Naive thymus-derived CD4-positive, alpha-beta T cell (primary cell): ENCODE measurements at regions of chr13 and their contacts with region 1.

Region 1: DNA sequence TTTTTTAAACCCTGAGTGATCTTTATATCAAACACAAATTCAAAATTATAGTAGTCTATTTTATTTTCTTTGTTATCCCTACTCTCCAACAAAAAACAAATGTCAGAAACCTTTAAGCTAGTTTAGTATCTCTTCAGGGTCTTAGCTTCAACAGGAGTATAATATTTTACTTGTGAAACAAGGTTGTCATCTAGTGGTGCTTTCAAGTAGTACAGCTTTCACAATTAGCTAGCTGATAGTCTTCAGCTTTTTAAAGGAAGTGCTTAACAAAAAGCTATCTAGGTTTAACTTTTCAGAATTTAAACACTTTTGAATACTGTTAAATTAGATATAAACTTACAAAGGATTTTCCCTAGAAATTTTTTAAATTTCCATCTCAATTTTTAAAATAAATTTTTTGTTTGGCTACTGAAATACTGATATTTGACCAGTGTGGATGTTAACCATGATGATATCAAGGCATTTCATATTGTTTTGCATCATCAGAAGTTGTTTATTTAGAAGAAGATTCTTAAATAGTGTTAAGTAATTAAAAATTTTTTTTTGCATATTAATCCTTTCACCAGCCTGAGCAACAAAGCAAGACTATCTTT is 34.2 kb downstream of the TDRD3 start:
- DNase-seq: peak in 6 of 9 donors; percentile 27 to 64 (median 53)
- ATAC-seq: peak; percentile 87
- H3K4me3 ChIP-seq: no peak overlapping the region
- H3K4me3 Mint-ChIP-seq: no peak overlapping the region
- H3K27ac ChIP-seq: no peak overlapping the region
- H3K27ac Mint-ChIP-seq: no peak overlapping the region
- H3K4me1 ChIP-seq: peaks cover 0 to 20% of the 10 kb centered on the region in 2 donors
- H3K4me1 Mint-ChIP-seq: peaks cover 12 to 31% (median 18%) of the 10 kb centered on the region in 7 donors
- H3K27me3 ChIP-seq: no peaks in the 10 kb centered on the region
- H3K27me3 Mint-ChIP-seq: no peaks in the 10 kb centered on the region

Region 2: DNA sequence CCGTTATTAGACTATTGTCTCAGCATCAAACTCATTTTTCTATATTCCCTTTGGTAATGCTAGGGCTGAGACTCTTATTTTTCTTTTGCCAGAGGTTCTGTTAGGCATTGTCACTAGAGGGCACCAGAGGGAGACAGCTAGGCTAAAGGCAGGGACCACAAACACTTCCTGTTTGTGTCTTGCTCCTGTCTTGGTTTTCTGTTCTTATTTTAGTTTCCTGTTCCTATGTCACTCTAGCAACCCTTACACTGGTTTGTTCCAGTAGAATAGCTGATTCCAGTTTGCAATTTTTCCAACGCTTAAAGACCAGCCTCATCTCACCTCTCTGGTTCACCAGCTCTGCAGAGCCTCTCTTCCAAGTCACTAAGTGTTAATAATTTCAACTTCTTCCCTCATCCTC is 1039.5 kb before region 1 on chr13:
- CTCF ChIA-PET with region 1: interaction called, 10 read pairs
- POLR2A ChIA-PET with region 1: interaction called, 3 read pairs
- intact Hi-C with region 1: loop called (anchors 1 kb)
- DNase-seq: peak; percentile 8 to 80 (median 73)
- ATAC-seq: peak; percentile 95
- H3K4me3 ChIP-seq: no peak overlapping the region
- H3K4me3 Mint-ChIP-seq: no peak overlapping the region
- H3K27ac ChIP-seq: no peak overlapping the region
- H3K27ac Mint-ChIP-seq: no peak overlapping the region
- H3K4me1 ChIP-seq: peaks cover 0 to 8% of the 10 kb centered on the region in 2 donors
- H3K4me1 Mint-ChIP-seq: peaks cover 0 to 6% (median 0%) of the 10 kb centered on the region in 7 donors
- H3K27me3 ChIP-seq: no peaks in the 10 kb centered on the region
- H3K27me3 Mint-ChIP-seq: peaks cover 0 to 22% (median 6%) of the 10 kb centered on the region in 5 donors

Region 3: DNA sequence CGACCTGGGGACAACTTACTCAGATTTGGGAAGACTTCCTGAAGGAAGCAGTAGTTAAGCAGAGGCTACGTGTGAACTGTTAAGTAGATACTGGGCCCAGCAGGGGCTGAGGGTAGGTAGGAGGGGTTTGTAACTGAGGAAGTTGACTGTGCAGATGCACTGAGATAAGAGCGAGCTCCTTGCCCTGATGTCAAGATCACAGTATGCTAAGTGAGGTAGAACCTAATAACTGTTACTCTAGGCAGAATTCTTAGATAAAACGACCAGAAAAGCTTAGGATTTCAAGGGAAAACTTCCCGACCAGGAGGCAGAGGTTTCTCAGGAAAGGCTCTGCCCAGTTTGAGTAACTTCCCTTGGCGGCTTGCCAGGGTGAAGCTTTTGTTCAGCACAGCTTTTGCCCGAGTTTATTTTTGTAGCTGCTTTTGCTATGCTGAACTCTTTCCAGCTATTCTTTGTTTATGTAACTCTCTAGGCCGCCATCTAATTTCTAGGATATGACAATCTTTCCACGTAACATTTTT is 899.6 kb before region 1 on chr13:
- CTCF ChIA-PET with region 1: no interaction called
- POLR2A ChIA-PET with region 1: no interaction called
- intact Hi-C with region 1: loop called in 1 of 2 experiments (anchors 10 kb)
- DNase-seq: peak in 7 of 9 donors; percentile 5 to 29 (median 11)
- ATAC-seq: peak; percentile 79
- H3K4me3 ChIP-seq: no peak overlapping the region
- H3K4me3 Mint-ChIP-seq: peak overlapping the region in 8 of 10 donors; percentile 11 to 70 (median 50)
- H3K27ac ChIP-seq: peak overlapping the region; percentile 6
- H3K27ac Mint-ChIP-seq: peak overlapping the region in 8 of 9 donors; percentile 29 to 92 (median 60)
- H3K4me1 ChIP-seq: no peaks in the 10 kb centered on the region
- H3K4me1 Mint-ChIP-seq: peaks cover 6 to 24% (median 15%) of the 10 kb centered on the region in 7 donors
- H3K27me3 ChIP-seq: no peaks in the 10 kb centered on the region
- H3K27me3 Mint-ChIP-seq: peaks cover 0 to under 1% (median 0%) of the 10 kb centered on the region in 5 donors

Region 4: DNA sequence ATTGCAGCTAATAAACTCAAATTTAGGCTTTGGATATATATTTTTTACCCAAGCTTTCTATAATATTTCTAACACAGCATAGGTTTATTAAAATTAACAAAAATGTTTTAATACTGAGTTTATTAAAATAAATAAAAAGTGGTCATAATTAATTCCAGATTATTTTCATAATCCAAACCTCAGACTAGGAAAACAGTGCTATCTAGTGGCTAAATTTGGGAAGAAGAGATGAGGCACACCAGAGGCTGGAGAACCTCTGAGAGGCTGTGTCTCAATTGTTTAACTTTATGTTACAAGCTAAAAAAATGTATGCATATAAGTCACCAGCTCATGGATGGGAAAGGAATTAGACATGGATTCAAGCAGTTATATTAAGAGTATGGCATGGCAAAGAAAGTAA is 659.9 kb before region 1 on chr13:
- CTCF ChIA-PET with region 1: no interaction called
- POLR2A ChIA-PET with region 1: no interaction called
- intact Hi-C with region 1: loop called in 1 of 2 experiments (anchors 10 kb)
- DNase-seq: no peak
- ATAC-seq: no peak
- H3K4me3 ChIP-seq: no peak overlapping the region
- H3K4me3 Mint-ChIP-seq: no peak overlapping the region
- H3K27ac ChIP-seq: no peak overlapping the region
- H3K27ac Mint-ChIP-seq: no peak overlapping the region
- H3K4me1 ChIP-seq: no peaks in the 10 kb centered on the region
- H3K4me1 Mint-ChIP-seq: peaks cover 0 to 6% (median 0%) of the 10 kb centered on the region in 7 donors
- H3K27me3 ChIP-seq: no peaks in the 10 kb centered on the region
- H3K27me3 Mint-ChIP-seq: no peaks in the 10 kb centered on the region

Region 5: GRCh38 chr13:60267498-60268198 is 163.6 kb before region 1 on chr13:
- CTCF ChIA-PET with region 1: no interaction called
- POLR2A ChIA-PET with region 1: no interaction called
- intact Hi-C with region 1: loop called in 1 of 2 experiments (anchors 5 kb)
- DNase-seq: peak in 6 of 9 donors; percentile 5 to 26 (median 14)
- ATAC-seq: peak; percentile 58
- H3K4me3 ChIP-seq: peak overlapping the region; percentile 79
- H3K4me3 Mint-ChIP-seq: no peak overlapping the region
- H3K27ac ChIP-seq: peak overlapping the region; percentile 49
- H3K27ac Mint-ChIP-seq: no peak overlapping the region
- H3K4me1 ChIP-seq: no peaks in the 10 kb centered on the region
- H3K4me1 Mint-ChIP-seq: peaks cover 0 to 3% (median 0%) of the 10 kb centered on the region in 7 donors
- H3K27me3 ChIP-seq: no peaks in the 10 kb centered on the region
- H3K27me3 Mint-ChIP-seq: peaks cover 5 to 13% (median 11%) of the 10 kb centered on the region in 5 donors

Region 6: DNA sequence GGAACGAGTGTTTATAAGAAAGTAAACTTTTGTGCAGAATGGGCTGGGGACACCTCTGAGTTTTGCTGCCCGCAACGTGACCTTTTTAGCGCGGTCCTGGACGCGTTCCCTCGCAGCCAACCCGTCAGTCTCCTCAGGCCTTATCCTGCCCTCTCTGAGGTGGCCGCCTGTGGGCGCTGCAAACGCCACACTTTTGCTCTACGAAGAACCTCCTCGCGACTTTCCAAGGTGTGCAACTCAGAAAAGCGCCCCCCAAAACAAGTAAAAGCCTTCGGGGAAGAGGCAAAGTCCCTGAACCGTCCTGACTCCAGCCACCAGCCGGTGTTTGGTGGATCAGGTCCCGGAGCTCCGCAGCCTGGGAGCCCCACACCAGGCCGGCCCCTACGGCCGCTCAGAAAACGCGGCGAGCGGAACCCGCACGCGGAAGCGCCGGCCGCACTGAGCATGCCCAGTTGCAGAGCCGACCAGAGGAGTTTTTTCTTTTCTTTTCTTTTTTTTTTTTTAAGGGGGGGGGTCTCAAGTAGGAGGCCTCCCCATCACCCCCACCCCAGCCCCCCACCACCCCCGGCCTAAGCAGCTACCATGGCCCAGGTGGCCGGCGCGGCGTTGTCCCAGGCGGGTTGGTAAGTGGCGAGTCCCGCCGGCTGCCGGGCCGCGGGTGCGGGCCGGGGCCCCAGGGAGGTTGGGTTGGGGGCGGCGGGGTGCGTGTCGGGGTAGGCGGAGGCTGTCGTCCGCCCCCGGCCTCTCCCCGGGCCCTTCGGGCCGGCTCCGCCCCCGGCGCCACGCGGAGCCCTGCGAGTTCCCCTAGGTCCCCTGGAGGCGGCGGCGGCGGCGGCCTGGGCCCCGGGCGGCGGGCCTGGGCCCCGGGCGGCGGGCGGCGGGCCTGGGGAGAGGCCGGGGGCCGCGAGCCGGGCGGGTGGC is 34.2 kb before region 1 on chr13 and contains the start of gene TDRD3:
- CTCF ChIA-PET with region 1: interaction called, 4 read pairs
- POLR2A ChIA-PET with region 1: interaction called, 10 read pairs
- intact Hi-C with region 1: loop called (anchors 1 kb)
- DNase-seq: peak; percentile 71 to 86 (median 82)
- ATAC-seq: peak; percentile 82
- H3K4me3 ChIP-seq: peak within 1 kb of the TSS; percentile 85
- H3K4me3 Mint-ChIP-seq: peak within 1 kb of the TSS; percentile 88 to 98 (median 95)
- H3K27ac ChIP-seq: peak within 1 kb of the TSS; percentile 80
- H3K27ac Mint-ChIP-seq: peak within 1 kb of the TSS; percentile 91 to 99 (median 96)
- H3K4me1 ChIP-seq: peaks cover 15 to 20% of the 10 kb centered on the region in 2 donors
- H3K4me1 Mint-ChIP-seq: peaks cover 25 to 54% (median 44%) of the 10 kb centered on the region in 7 donors
- H3K27me3 ChIP-seq: no peaks in the 10 kb centered on the region
- H3K27me3 Mint-ChIP-seq: no peaks in the 10 kb centered on the region
- total RNA-seq, gene TDRD3: 24.7 to 33.6 (median 27.2) TPM

Region 7: DNA sequence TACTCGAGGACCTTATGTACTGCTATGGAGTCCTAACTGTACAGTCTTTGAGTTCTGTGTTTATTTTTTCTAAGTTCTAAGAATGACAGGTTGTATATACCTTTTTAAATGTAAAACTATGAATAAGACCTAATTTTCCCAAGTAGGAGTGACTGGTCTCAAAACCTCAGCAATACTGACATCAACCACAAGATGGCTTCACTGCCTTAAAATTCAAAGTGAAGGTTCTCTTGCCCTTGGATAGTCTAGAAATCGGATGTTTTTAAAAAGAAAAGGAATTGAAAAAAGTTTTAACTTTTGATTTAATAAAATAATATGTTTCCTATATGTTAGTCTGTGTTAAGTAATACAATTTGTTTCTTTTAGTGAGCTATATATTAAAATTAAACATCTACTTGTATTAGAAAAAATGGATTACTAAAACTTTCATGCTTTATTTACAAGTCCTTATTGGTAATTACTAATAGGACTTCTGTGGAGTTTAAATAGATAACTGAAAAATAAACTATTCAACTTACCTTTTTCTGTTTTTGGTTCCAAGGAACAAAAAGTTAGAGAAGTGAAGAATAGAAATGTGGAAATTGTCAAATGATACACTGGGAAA is 17.8 kb after region 1 on chr13:
- CTCF ChIA-PET with region 1: no interaction called
- POLR2A ChIA-PET with region 1: no interaction called
- intact Hi-C with region 1: no loop called
- DNase-seq: peak in 4 of 9 donors; percentile 5 to 24 (median 16)
- ATAC-seq: no peak
- H3K4me3 ChIP-seq: no peak overlapping the region
- H3K4me3 Mint-ChIP-seq: no peak overlapping the region
- H3K27ac ChIP-seq: no peak overlapping the region
- H3K27ac Mint-ChIP-seq: no peak overlapping the region
- H3K4me1 ChIP-seq: no peaks in the 10 kb centered on the region
- H3K4me1 Mint-ChIP-seq: no peaks in the 10 kb centered on the region
- H3K27me3 ChIP-seq: no peaks in the 10 kb centered on the region
- H3K27me3 Mint-ChIP-seq: no peaks in the 10 kb centered on the region